AG04450 (cell line): ENCODE measurements at regions of chr7 and their contacts with region 1.

Region 1: GRCh38 chr7:143901668-143902331 is at the start of gene TCAF1:
- DNase-seq: peak; percentile 85
- H3K4me3 ChIP-seq: peak within 1 kb of the TSS; percentile 85
- H3K27ac ChIP-seq: peak within 1 kb of the TSS; percentile 83
- H3K27me3 ChIP-seq: no peaks in the 10 kb centered on the region
- CTCF ChIP-seq: peak; percentile 45
- polyA plus RNA-seq, gene TCAF1: 57.0 and 61.3 TPM in 2 replicates

Region 2: DNA sequence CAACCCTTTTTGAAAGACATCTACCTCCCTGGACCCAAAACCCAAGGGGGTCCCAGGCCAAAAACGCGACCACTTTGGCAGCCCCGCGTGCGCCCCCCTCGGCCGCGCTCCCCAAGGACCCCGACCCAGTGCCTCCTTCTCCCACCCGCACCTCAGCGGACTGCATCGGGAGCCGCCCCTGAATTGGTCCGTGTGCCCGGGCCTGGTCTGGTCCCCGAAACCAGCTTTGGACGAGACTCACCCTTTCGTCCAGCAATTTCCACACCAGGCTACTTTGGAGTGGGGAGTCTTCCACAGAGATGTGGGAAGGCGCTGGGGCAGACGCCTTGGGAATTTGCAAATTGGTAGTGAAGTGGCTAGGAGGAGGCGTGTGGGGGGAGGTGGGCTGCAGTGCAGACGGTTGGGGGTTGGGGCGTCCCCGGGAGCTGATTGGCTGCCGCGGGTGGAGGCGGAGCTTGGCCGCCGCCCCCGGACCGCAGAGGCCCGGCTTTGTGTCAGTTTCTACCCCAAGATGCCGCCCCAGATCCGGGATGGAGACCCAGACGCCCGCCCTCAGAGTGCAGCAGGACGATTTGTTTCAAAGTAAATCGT is 16.7 kb before region 1 on chr7:
- CTCF ChIA-PET with region 1: interaction called, 41 read pairs
- POLR2A ChIA-PET with region 1: interaction called, 26 read pairs
- DNase-seq: no peak
- H3K4me3 ChIP-seq: peak overlapping the region; percentile 89
- H3K27ac ChIP-seq: no peak overlapping the region
- H3K27me3 ChIP-seq: no peaks in the 10 kb centered on the region
- CTCF ChIP-seq: no peak

Region 3: GRCh38 chr7:143934526-143935325 is 32.9 kb after region 1 on chr7 and contains the start of gene OR2F2:
- CTCF ChIA-PET with region 1: no interaction called
- POLR2A ChIA-PET with region 1: interaction called, 13 read pairs
- DNase-seq: peak; percentile 38
- H3K4me3 ChIP-seq: no peak within 1 kb of the TSS
- H3K27ac ChIP-seq: peak within 1 kb of the TSS; percentile 73
- H3K27me3 ChIP-seq: no peaks in the 10 kb centered on the region
- CTCF ChIP-seq: no peak
- polyA plus RNA-seq, gene OR2F2: not detected in 2 replicates

Region 4: DNA sequence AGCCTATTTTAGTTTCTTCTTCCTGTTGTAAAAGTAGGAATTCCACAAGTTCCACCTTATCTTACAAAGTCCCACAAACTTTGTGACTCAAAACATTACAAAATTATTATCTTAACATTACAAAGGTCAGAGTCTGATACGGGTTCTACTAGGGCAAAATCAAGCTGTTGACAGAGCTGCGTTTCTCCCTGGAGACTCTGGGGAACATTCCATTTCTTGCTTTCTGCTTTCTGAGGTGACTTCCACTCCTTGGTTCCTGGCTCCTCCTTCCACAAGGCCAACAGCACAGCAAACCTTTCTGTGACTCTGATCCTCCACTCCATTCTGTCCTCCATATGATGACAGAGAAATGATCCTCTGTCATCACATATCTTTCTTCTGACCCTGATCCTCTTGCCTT is 63.5 kb after region 1 on chr7:
- CTCF ChIA-PET with region 1: no interaction called
- POLR2A ChIA-PET with region 1: no interaction called
- DNase-seq: no peak
- H3K4me3 ChIP-seq: no peak overlapping the region
- H3K27ac ChIP-seq: no peak overlapping the region
- H3K27me3 ChIP-seq: no peaks in the 10 kb centered on the region
- CTCF ChIP-seq: no peak

Region 5: DNA sequence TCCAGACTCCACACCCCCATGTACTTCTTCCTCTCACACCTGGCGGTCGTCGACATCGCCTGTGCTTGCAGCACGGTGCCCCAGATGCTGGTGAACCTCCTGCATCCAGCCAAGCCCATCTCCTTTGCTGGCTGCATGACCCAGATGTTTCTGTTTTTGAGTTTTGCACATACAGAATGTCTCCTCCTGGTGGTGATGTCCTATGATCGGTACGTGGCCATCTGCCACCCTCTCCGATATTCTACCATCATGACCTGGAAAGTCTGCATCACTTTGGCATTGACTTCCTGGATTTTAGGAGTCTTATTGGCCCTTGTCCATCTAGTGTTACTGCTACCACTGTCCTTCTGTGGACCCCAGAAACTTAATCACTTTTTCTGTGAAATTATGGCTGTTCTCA is 172.6 kb after region 1 on chr7:
- CTCF ChIA-PET with region 1: no interaction called
- POLR2A ChIA-PET with region 1: no interaction called
- DNase-seq: no peak
- H3K4me3 ChIP-seq: no peak overlapping the region
- H3K27ac ChIP-seq: no peak overlapping the region
- H3K27me3 ChIP-seq: no peaks in the 10 kb centered on the region
- CTCF ChIP-seq: 0 out of 2 replicates have a peak, but pooled peaks have one; percentile 8